ENCODE measurements at regions of chr11 and their contacts with region 1.

Region 1: GRCh38 chr11:10366568-10367370 is 61.9 kb downstream of the ADM start:
- DNase-seq: peak; percentile 72 to 84
- ATAC-seq: peak; percentile 93 to 94
- H3K4me3 ChIP-seq: peak overlapping the region in 1 of 4 donors; percentile 11
- H3K27ac ChIP-seq: peak overlapping the region; percentile 64 to 83 (median 69)
- H3K4me1 ChIP-seq: peaks cover 11 to 21% of the 10 kb centered on the region in 2 donors
- H3K27me3 ChIP-seq: no peaks in the 10 kb centered on the region
- CTCF ChIP-seq: peak; percentile 60 to 91 (median 83)
- POLR2A ChIP-seq: no peak

Region 2: DNA sequence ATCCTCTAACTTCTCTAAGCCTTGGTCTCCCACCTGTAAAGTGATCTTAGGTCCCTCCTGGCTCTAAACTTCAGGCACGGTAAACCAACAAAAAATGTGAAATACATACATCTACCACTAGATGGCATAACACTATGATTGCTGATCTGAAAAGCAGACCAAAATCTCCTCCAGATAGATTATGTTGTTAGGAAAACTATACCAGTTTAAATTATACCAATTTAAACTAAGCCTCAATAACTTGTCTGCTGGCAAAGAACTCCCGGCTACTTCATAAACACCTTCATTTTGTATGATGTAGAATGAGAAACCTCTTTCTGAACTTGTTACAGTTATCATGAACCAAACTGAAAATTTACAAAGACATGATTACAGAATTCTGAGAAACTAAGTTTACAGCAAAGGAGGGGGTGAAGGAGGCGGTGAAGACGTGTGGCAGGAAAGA is 158.6 kb before region 1 on chr11:
- in situ Hi-C with region 1: no loop called
- intact Hi-C with region 1: loop called (anchors 2 kb)
- DNase-seq: no peak
- ATAC-seq: peak; percentile 61 to 87
- H3K4me3 ChIP-seq: no peak overlapping the region
- H3K27ac ChIP-seq: peak overlapping the region in 1 of 4 donors; percentile 9
- H3K4me1 ChIP-seq: peaks cover 0 to 7% of the 10 kb centered on the region in 2 donors
- H3K27me3 ChIP-seq: no peaks in the 10 kb centered on the region
- CTCF ChIP-seq: peak; percentile 68 to 80 (median 79)
- POLR2A ChIP-seq: no peak

Region 3: GRCh38 chr11:10314199-10315072 is 52.3 kb before region 1 on chr11:
- in situ Hi-C with region 1: loop called in 1 of 4 experiments (anchors 10 kb)
- intact Hi-C with region 1: loop called (anchors 5 kb)
- DNase-seq: no peak
- ATAC-seq: no peak
- H3K4me3 ChIP-seq: no peak overlapping the region
- H3K27ac ChIP-seq: no peak overlapping the region
- H3K4me1 ChIP-seq: peaks cover 30 to 37% of the 10 kb centered on the region in 2 donors
- H3K27me3 ChIP-seq: no peaks in the 10 kb centered on the region
- CTCF ChIP-seq: no peak
- POLR2A ChIP-seq: no peak

Region 4: DNA sequence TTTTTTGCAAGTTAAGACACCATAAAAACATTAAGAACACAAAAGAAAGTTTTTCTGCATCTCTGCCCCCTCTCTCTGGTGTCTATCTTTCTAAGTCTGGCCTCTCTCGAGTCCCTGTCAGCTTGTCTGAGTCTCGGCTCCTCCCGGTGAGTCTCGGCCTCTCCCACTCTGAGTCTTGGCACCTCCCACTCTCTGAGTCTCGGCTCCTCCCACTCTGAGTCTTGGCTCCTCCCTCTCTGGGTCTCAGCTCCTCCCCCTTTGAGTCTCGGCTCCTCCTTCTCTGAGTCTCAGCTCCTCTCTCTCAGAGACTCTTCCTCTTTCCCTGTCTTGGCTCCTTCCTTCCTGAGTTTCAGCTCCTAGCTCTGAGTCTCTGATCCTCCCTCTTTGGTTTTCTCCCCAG is 15.7 kb after region 1 on chr11:
- in situ Hi-C with region 1: no loop called
- intact Hi-C with region 1: no loop called
- DNase-seq: no peak
- ATAC-seq: no peak
- H3K4me3 ChIP-seq: no peak overlapping the region
- H3K27ac ChIP-seq: no peak overlapping the region
- H3K4me1 ChIP-seq: peaks cover 17 to 24% of the 10 kb centered on the region in 2 donors
- H3K27me3 ChIP-seq: no peaks in the 10 kb centered on the region
- CTCF ChIP-seq: no peak
- POLR2A ChIP-seq: no peak

Measured in gastrocnemius medialis (tissue), 4 donors.